CD8-positive, alpha-beta T cell (primary cell): ENCODE measurements at regions of chr2 and their contacts with region 1.

Region 1: DNA sequence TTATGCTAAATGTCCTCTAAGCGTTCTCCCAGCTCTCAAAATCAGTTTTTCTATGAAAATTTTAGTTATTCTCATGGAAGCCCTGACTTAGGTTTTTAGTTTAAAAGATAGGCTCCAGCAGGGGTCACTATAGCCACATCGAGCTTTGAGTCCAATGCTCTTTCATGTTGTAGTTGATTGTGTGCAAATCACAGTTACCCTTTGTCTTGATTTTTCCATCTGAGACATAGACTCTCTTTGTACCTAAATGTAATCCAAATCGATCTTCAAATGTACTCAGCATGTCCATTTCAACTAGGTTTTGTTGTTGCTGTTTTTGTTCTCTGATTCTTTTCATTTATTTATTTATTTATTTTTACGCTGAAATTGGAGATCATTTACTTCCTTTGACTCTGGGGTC is 26.4 kb upstream of the MSTN start:
- DNase-seq: peak in 6 of 9 experiments; percentile 4 to 66 (median 30)
- ATAC-seq: peak; percentile 42
- H3K4me3 ChIP-seq: no peak overlapping the region
- H3K4me3 Mint-ChIP-seq: no peak overlapping the region
- H3K27ac ChIP-seq: no peak overlapping the region
- H3K27ac Mint-ChIP-seq: no peak overlapping the region
- H3K4me1 ChIP-seq: no peaks in the 10 kb centered on the region
- H3K4me1 Mint-ChIP-seq: no peaks in the 10 kb centered on the region
- H3K27me3 ChIP-seq: no peaks in the 10 kb centered on the region
- H3K27me3 Mint-ChIP-seq: no peaks in the 10 kb centered on the region
- CTCF ChIP-seq: peak; percentile 30

Region 2: GRCh38 chr2:190121971-190122370 is 33.1 kb after region 1 on chr2:
- CTCF ChIA-PET with region 1: interaction called, 7 read pairs
- POLR2A ChIA-PET with region 1: no interaction called
- intact Hi-C with region 1: loop called in 1 of 2 experiments (anchors 2 kb)
- DNase-seq: peak in 2 of 9 experiments; percentile 4 to 11
- ATAC-seq: no peak
- H3K4me3 ChIP-seq: no peak overlapping the region
- H3K4me3 Mint-ChIP-seq: no peak overlapping the region
- H3K27ac ChIP-seq: no peak overlapping the region
- H3K27ac Mint-ChIP-seq: no peak overlapping the region
- H3K4me1 ChIP-seq: no peaks in the 10 kb centered on the region
- H3K4me1 Mint-ChIP-seq: peaks cover 11% of the 10 kb centered on the region
- H3K27me3 ChIP-seq: no peaks in the 10 kb centered on the region
- H3K27me3 Mint-ChIP-seq: no peaks in the 10 kb centered on the region
- CTCF ChIP-seq: no peak

Region 3: DNA sequence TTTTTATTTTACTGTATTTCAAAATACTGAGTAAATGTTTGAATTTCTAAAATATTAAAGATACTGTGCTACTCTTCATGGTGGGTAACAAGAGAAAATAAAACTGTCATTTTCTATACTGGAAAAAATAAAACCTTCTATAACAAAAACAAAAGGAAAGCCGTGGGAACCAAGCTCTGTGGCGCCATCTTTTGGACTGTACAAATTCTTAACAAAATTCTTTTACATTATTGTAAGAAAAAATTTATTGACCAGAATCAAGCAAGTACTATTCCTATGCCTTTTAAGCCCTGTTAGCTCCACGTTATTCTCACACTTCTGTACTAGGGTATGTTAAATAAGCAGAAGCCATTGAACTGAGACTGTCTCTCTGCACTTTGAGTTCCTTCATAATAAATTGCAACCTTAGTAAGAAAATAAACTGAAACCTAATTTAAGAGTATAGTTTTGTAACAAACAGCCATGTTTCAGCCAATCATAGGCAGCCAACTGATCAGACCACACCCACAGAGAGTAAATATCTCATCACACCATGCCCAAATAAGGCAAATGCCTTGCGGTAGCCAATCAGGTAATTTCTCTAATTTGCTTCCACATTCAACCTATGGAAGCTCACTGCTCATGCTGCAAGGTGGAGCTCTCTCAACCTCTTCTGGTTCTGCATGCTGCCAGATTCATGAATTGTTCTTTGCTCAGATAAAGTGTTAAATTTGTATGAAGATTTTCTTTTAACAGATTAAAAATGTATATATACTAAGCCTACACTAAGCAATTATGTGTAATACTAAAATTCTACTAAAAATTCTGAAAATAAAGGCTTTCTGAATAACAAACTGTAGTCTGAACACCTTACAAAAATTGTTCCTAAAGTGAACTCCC is 188.6 kb after region 1 on chr2:
- CTCF ChIA-PET with region 1: no interaction called
- POLR2A ChIA-PET with region 1: no interaction called
- intact Hi-C with region 1: loop called in 1 of 2 experiments (anchors 2 kb)
- DNase-seq: peak in 3 of 9 experiments; percentile 5 to 37 (median 22)
- ATAC-seq: peak; percentile 54
- H3K4me3 ChIP-seq: no peak overlapping the region
- H3K4me3 Mint-ChIP-seq: no peak overlapping the region
- H3K27ac ChIP-seq: no peak overlapping the region
- H3K27ac Mint-ChIP-seq: no peak overlapping the region
- H3K4me1 ChIP-seq: no peaks in the 10 kb centered on the region
- H3K4me1 Mint-ChIP-seq: no peaks in the 10 kb centered on the region
- H3K27me3 ChIP-seq: no peaks in the 10 kb centered on the region
- H3K27me3 Mint-ChIP-seq: no peaks in the 10 kb centered on the region
- CTCF ChIP-seq: peak; percentile 50

Region 4: GRCh38 chr2:190311893-190312634 is 223.1 kb after region 1 on chr2:
- CTCF ChIA-PET with region 1: interaction called, 6 read pairs
- POLR2A ChIA-PET with region 1: no interaction called
- intact Hi-C with region 1: loop called in 1 of 2 experiments (anchors 2 kb)
- DNase-seq: no peak
- ATAC-seq: no peak
- H3K4me3 ChIP-seq: no peak overlapping the region
- H3K4me3 Mint-ChIP-seq: no peak overlapping the region
- H3K27ac ChIP-seq: no peak overlapping the region
- H3K27ac Mint-ChIP-seq: no peak overlapping the region
- H3K4me1 ChIP-seq: no peaks in the 10 kb centered on the region
- H3K4me1 Mint-ChIP-seq: peaks cover 31% of the 10 kb centered on the region
- H3K27me3 ChIP-seq: no peaks in the 10 kb centered on the region
- H3K27me3 Mint-ChIP-seq: no peaks in the 10 kb centered on the region
- CTCF ChIP-seq: no peak

Region 5: GRCh38 chr2:190319555-190320498 is 230.9 kb after region 1 on chr2 and contains the start of gene HIBCH:
- CTCF ChIA-PET with region 1: interaction called, 5 read pairs
- POLR2A ChIA-PET with region 1: no interaction called
- intact Hi-C with region 1: loop called in 1 of 2 experiments (anchors 2 kb)
- DNase-seq: peak; percentile 51 to 91 (median 83)
- ATAC-seq: peak; percentile 89
- H3K4me3 ChIP-seq: peak within 1 kb of the TSS; percentile 77 to 94
- H3K4me3 Mint-ChIP-seq: peak within 1 kb of the TSS; percentile 100
- H3K27ac ChIP-seq: peak within 1 kb of the TSS; percentile 66 to 88
- H3K27ac Mint-ChIP-seq: peak within 1 kb of the TSS; percentile 98
- H3K4me1 ChIP-seq: peaks cover 19% of the 10 kb centered on the region
- H3K4me1 Mint-ChIP-seq: peaks cover 50% of the 10 kb centered on the region
- H3K27me3 ChIP-seq: no peaks in the 10 kb centered on the region
- H3K27me3 Mint-ChIP-seq: no peaks in the 10 kb centered on the region
- CTCF ChIP-seq: peak; percentile 70
- total RNA-seq, gene HIBCH: 3.7 to 5.8 TPM

Region 6: GRCh38 chr2:190376591-190377245 is 287.8 kb after region 1 on chr2:
- CTCF ChIA-PET with region 1: interaction called, 9 read pairs
- POLR2A ChIA-PET with region 1: no interaction called
- intact Hi-C with region 1: loop called (anchors 1 kb)
- DNase-seq: no peak
- ATAC-seq: no peak
- H3K4me3 ChIP-seq: no peak overlapping the region
- H3K4me3 Mint-ChIP-seq: no peak overlapping the region
- H3K27ac ChIP-seq: no peak overlapping the region
- H3K27ac Mint-ChIP-seq: no peak overlapping the region
- H3K4me1 ChIP-seq: no peaks in the 10 kb centered on the region
- H3K4me1 Mint-ChIP-seq: no peaks in the 10 kb centered on the region
- H3K27me3 ChIP-seq: peaks cover 0 to 2% of the 10 kb centered on the region in 2 experiments
- H3K27me3 Mint-ChIP-seq: no peaks in the 10 kb centered on the region
- CTCF ChIP-seq: no peak